Right cardiac atrium (tissue), 5 donors: ENCODE measurements at regions of chr2 and their contacts with region 1.

Region 1: GRCh38 chr2:9613291-9613690 is 17.5 kb downstream of the YWHAQ start:
- DNase-seq: no peak
- ATAC-seq: peak; percentile 58 to 65
- H3K4me3 ChIP-seq: no peak overlapping the region
- H3K27ac ChIP-seq: no peak overlapping the region
- H3K4me1 ChIP-seq: peaks cover 9% of the 10 kb centered on the region
- H3K27me3 ChIP-seq: no peaks in the 10 kb centered on the region

Region 2: DNA sequence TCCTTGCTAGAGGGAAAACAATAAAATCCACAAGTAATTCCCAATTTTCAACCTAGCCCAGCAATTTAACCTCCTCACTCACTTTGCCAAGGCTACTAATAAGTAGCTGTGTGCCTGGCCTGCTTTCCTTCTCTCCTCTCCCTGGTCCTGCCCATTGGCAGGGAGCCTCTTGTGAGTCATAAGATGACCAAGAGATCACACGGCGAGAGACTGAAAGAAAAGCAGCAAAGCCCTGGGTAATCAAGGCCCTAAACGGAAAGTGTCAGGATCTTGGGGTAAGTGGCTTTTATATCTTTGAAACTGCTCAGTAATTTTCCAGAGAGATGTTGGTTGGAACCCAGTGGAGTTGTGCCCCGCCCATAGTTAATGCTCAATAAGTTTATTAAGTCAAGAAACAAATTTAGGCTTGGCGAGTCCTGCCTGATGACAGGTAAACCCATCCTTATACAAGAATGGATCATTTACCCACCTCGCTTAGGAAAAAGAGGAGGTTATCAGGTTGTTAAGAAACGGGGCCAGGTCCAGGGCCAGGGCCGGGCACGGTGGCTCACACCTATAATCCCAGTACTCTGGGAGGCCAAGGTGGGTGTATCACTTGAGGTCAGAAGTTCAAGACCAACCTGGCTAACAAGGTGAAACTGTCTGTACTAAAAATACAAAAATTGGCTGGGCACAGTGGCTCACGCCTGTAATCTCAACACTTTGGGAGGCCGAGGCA is 47.7 kb before region 1 on chr2:
- intact Hi-C with region 1: loop called in 1 of 4 experiments (anchors 10 kb)
- DNase-seq: peak; percentile 84 to 91 (median 84)
- ATAC-seq: peak; percentile 95
- H3K4me3 ChIP-seq: no peak overlapping the region
- H3K27ac ChIP-seq: peak overlapping the region; percentile 63
- H3K4me1 ChIP-seq: peaks cover 3% of the 10 kb centered on the region
- H3K27me3 ChIP-seq: no peaks in the 10 kb centered on the region